Head of caudate nucleus (tissue), 42 donors: ENCODE measurements at regions of chr1 and their contacts with region 1.

Region 1: DNA sequence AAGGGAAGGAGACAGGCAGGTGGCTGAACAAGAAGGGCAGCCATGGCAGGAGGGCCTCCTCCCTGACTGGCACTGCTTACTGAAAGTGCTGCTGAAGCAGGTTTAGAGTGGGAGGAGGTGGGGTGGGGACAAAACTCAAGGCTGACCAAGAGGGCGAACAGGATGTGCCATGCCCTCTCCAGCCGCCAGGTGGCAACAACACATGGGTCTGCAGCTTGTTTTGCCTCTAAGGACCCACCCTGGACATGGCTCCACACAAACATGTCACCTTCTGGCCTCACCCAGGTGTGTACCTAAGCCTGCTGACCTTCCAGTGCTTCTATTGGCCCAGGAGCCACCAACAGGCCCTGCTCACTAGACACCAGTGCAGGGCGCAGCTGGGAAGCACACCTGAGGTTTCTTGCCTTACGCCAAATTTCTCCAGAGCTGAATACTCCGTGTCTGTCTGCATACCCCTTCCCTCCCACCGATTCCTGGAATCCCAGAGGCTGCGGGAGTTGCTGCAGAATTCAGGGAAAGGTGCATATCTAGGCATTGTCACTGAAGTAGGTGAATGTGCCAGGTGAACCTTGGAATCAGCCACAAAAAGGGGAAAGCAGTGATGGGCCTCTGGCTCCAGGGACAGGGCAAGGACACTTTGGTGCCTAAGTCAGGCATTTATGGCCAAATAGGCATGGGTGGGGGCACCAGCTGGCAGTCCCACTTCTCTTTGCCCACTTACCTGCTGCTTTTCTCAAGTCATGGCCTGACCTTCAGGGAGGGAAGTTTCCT is 5.3 kb downstream of the PSRC1 start:
- DNase-seq: peak in 41 of 42 donors; percentile 66 to 95 (median 87)

Region 2: DNA sequence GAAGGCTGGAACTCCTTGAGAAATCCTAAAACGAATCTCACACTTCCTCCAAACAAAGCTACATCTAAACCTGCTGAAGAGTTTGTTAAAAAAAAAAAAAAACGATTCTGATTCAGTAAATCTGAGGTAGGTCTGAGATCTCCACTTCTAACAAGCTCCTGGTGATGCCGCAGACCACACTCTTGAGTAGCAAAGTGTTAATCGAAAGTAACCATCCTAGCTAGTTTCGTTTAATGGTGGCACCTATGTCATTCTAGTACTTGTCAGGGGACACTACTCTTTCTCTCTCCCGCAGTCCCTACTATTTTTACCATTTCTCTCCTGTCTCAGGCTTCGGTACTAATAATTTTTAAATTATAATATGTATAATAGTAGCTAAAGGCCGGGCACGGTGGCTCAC is 316.4 kb before region 1 on chr1:
- intact Hi-C with region 1: no loop called
- DNase-seq: no peak

Region 3: DNA sequence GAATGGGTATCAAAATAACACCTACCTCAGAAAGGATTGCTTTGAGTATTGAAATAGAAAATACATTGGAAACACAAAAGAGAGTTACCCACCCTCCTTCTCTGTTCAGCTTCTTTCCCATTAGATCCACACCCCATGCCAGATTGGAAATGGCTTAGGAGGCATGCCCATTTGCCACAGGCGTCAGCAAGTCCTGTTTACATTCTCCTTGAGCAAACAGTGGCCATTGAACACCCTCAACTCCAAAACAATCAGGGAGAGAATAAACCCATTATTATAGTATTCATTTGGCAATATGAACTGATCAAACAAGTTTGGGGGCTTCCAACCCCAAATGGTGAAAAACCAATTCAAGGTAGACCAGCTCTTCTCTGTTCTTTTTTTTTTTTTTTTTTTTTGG is 161.3 kb before region 1 on chr1:
- intact Hi-C with region 1: no loop called
- DNase-seq: no peak

Region 4: DNA sequence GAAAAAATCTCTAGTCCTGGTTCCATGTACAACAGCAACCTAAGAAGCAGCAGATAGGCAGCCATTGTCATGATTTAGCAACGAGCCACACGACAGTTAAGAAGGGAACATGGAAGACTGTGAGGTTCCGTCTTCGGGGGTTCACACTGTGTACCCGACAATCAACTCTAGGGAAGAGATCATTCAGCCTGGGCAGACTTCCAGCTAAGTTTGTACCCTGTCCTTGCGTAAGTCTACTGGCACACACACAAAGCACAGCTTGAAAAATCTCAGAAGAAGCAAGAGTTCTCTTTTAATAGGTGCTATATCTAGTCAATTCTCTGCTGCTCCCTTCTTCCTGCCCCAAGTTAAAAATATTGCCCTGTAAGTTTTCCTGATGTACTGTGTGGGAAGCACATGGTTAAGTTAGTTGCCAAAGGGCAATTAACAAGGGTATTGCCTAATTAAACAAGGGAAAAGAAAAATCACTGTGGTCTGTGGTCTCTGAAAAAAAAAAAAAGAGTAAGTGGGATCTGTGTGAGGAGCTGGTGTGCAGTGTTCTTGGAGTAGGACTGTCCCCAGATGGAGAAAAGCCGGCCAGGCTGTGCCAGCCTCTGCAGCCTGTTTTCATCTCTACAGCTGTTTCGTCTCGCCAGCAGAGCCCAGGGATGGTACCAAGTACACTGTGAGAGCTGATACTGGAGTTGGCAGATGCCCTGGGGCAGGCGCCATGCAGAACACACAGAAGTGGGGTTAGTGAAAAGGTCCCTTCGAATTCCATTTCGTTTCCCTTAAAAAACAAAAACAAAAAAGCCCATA is 35.6 kb after region 1 on chr1:
- intact Hi-C with region 1: loop called (anchors 5 kb)
- DNase-seq: peak; percentile 73 to 95 (median 87)

Region 5: GRCh38 chr1:109327285-109327684 is 49.7 kb after region 1 on chr1:
- intact Hi-C with region 1: no loop called
- DNase-seq: peak in 39 of 42 donors; percentile 22 to 90 (median 65)